HCT116 (cell line): ENCODE measurements at regions of chr6 and their contacts with region 1.

Region 1: DNA sequence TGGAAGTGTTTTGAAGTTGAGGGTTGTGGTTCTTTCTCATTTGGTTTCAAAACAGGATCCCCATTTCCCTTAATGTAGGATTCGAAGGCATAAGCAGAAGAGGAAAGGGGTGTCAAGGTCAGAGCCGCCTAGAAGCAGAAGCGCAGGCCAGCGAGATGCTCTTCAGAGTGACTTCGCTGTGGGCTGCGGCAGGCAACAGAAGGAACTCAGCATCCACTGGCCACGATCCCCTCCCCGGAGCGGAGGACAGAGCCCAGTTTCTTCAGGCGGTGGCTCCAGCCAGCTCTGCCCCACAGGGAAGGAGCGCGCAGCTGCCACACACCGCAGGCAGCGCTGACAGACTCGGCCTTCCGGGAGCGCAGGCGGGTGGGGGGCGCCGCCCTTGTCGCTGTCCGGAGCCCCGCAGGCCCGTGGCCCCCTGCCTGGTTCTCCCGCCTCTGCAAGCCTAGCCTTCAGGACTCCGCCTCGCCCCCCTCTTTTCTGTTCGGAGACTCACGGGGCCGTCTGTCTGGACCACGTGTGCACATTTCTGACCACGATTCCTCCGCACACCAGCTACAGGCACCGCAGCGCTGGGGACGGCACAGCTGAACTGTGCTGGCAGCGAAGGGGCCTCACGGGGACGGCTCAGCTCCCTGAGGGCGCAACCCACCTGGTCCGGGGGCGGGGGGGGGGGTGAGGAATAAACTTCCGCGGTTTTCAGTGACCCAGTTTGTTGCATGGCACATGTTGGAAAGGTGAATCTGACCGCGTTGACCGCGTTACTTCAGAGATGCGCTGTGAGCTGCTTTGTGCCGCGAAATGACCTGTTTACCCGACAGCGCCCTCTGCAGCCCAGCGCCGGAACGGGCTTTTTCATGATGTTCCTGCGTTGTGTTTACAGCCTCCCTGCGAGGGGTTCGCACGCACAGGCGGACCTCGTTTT is 26.1 kb downstream of the TTLL2 start:
- DNase-seq: peak; percentile 52
- ATAC-seq: peak; percentile 95
- H3K4me3 ChIP-seq: peak overlapping the region; percentile 35 to 55
- H3K27ac ChIP-seq: no peak overlapping the region
- H3K4me1 ChIP-seq: peaks cover 0 to 13% of the 10 kb centered on the region in 2 experiments; a peak in 2 of 4 replicates
- H3K27me3 ChIP-seq: peaks cover 6% of the 10 kb centered on the region
- CTCF ChIP-seq: peak; percentile 63 to 89 (median 83)
- POLR2A ChIP-seq: no peak
- RAD21 ChIP-seq: peak; percentile 77

Region 2: GRCh38 chr6:167214206-167214605 is 136.8 kb before region 1 on chr6:
- CTCF ChIA-PET with region 1: interaction called, 4 read pairs
- POLR2A ChIA-PET with region 1: no interaction called
- RAD21 ChIA-PET with region 1: no interaction called
- intact Hi-C with region 1: loop called (anchors 1 kb)
- DNase-seq: no peak
- ATAC-seq: no peak
- H3K4me3 ChIP-seq: no peak overlapping the region
- H3K27ac ChIP-seq: no peak overlapping the region
- H3K4me1 ChIP-seq: no peaks in the 10 kb centered on the region
- H3K27me3 ChIP-seq: peaks cover 15% of the 10 kb centered on the region; the same call in 1 of the 2 replicates
- CTCF ChIP-seq: no peak
- POLR2A ChIP-seq: no peak
- RAD21 ChIP-seq: no peak

Region 3: DNA sequence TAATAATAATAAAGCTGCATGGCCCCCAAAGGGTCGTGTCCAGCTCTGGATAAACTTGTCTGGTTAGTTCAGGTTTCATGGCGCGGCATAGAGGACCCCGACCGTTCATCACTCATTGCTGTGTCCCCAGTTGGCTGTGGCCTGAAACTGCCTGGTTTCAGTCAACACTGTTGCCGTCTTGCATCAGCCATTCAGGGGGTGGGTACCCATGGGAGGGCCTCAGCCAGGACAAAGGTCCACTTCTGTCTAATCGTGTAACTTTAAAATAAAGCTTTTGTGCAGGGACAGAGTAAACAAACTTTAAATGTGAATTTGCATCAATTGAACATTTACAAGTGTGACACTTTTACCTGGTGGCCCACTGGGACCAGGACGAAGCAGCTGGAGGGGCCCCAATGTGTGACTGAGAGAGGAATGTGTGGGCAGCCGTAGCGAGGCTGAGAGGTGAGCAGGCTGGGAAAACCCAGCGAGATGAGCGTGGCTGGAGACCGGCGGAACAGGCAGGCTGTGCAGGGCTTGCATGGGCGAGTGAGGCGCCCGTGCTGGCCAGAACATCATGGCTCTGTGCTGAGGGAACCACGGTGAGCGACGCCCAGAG is 82.2 kb before region 1 on chr6:
- CTCF ChIA-PET with region 1: no interaction called
- POLR2A ChIA-PET with region 1: no interaction called
- RAD21 ChIA-PET with region 1: no interaction called
- intact Hi-C with region 1: no loop called
- DNase-seq: no peak
- ATAC-seq: no peak
- H3K4me3 ChIP-seq: no peak overlapping the region
- H3K27ac ChIP-seq: no peak overlapping the region
- H3K4me1 ChIP-seq: no peaks in the 10 kb centered on the region
- H3K27me3 ChIP-seq: no peaks in the 10 kb centered on the region
- CTCF ChIP-seq: no peak
- POLR2A ChIP-seq: no peak
- RAD21 ChIP-seq: no peak